Activated CD4-positive, alpha-beta T cell treated with anti-CD3 and anti-CD28 coated beads for 36 hours (primary cell): ENCODE measurements at regions of chr17 and their contacts with region 1.

Region 1: DNA sequence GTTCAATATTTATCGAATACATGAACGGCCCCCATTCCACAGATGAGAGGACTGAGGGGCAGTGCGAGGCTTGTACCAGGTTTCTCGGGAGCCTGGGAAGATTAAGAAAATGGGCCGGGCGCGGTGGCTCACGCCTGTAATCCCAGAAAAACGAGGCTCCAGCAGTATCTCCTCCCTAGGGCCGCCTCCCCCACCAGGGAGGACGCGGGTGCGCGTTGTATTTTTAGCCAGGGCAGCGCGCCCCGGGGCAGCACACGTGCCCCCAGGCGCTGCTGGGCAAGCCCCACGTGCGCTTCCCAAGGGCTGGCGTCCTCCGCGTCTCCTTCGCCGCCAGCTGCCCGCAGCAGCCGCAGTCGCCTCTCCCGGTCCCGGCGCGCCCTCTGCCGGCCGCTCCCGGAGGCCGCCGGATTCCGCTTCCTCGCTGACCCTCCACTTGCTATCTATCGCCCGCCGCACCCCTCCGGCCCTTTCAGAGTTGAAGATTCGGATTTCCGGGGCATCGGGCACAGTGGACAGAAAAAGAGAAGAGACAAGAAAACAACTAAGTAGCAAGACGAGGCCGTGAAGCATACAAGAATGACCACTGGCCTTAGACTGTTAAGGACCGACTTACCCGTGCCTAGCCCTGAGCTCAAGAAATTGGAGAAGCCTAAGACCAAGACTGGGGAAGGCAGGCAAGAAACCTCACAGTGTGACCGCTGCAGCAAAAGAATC is 1.9 kb upstream of the YBX2 start:
- DNase-seq: peak; percentile 83
- ATAC-seq: peak; percentile 38
- H3K4me3 Mint-ChIP-seq: peak overlapping the region; percentile 35
- H3K27ac Mint-ChIP-seq: no peak overlapping the region
- H3K4me1 Mint-ChIP-seq: peaks cover 23% of the 10 kb centered on the region
- H3K27me3 Mint-ChIP-seq: peaks cover 19% of the 10 kb centered on the region

Region 2: GRCh38 chr17:5758651-5759050 is 1537.7 kb before region 1 on chr17:
- CTCF ChIA-PET with region 1: no interaction called
- POLR2A ChIA-PET with region 1: no interaction called
- intact Hi-C with region 1: no loop called
- DNase-seq: peak; percentile 22
- ATAC-seq: peak; percentile 49
- H3K4me3 Mint-ChIP-seq: no peak overlapping the region
- H3K27ac Mint-ChIP-seq: no peak overlapping the region
- H3K4me1 Mint-ChIP-seq: no peaks in the 10 kb centered on the region
- H3K27me3 Mint-ChIP-seq: peaks cover 43% of the 10 kb centered on the region

Region 3: DNA sequence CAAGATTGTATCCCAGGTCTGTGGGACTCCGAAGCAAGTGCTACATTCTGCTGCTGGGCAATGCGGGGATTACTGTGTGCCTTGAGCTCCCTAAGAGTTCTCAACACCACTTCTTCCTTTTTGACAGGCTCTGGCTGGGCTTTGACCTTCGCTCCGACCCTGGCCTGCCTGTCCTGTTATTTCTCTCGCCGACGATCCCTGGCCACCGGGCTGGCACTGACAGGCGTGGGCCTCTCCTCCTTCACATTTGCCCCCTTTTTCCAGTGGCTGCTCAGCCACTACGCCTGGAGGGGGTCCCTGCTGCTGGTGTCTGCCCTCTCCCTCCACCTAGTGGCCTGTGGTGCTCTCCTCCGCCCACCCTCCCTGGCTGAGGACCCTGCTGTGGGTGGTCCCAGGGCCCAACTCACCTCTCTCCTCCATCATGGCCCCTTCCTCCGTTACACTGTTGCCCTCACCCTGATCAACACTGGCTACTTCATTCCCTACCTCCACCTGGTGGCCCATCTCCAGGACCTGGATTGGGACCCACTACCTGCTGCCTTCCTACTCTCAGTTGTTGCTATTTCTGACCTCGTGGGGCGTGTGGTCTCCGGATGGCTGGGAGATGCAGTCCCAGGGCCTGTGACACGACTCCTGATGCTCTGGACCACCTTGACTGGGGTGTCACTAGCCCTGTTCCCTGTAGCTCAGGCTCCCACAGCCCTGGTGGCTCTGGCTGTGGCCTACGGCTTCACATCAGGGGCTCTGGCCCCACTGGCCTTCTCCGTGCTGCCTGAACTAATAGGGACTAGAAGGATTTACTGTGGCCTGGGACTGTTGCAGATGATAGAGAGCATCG is 258.1 kb before region 1 on chr17:
- CTCF ChIA-PET with region 1: no interaction called
- POLR2A ChIA-PET with region 1: no interaction called
- intact Hi-C with region 1: no loop called
- DNase-seq: no peak
- ATAC-seq: no peak
- H3K4me3 Mint-ChIP-seq: no peak overlapping the region
- H3K27ac Mint-ChIP-seq: no peak overlapping the region
- H3K4me1 Mint-ChIP-seq: peaks cover 39% of the 10 kb centered on the region
- H3K27me3 Mint-ChIP-seq: no peaks in the 10 kb centered on the region

Region 4: DNA sequence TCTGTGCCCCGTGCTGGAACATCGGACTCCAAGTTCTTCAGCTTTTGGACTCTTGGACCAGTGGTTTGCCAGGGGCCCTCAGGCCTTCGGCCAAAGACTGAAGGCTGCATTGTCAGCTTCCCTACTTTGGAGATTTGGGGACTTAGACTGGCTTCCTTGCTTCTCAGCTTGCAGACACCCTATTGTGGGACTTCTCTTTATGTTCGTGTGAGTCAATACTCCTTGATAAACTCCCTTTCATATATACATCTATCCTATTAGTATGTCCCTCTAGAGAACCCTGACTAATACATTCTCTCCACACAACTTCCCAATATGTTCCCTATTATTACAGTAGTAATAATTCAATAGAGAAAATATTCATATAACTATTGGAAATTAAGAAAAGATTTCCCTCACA is 172.5 kb before region 1 on chr17:
- CTCF ChIA-PET with region 1: no interaction called
- POLR2A ChIA-PET with region 1: no interaction called
- intact Hi-C with region 1: no loop called
- DNase-seq: no peak
- ATAC-seq: no peak
- H3K4me3 Mint-ChIP-seq: no peak overlapping the region
- H3K27ac Mint-ChIP-seq: no peak overlapping the region
- H3K4me1 Mint-ChIP-seq: no peaks in the 10 kb centered on the region
- H3K27me3 Mint-ChIP-seq: peaks cover 8% of the 10 kb centered on the region

Region 5: GRCh38 chr17:7219812-7220581 is 76.3 kb before region 1 on chr17 and contains the starts of genes ACADVL and DLG4:
- CTCF ChIA-PET with region 1: interaction called, 22 read pairs
- POLR2A ChIA-PET with region 1: no interaction called
- intact Hi-C with region 1: loop called in 1 of 2 experiments (anchors 1 kb)
- DNase-seq: peak; percentile 94
- ATAC-seq: peak; percentile 73
- H3K4me3 Mint-ChIP-seq: peak within 1 kb of the TSS; percentile 89
- H3K27ac Mint-ChIP-seq: peak within 1 kb of the TSS; percentile 96
- H3K4me1 Mint-ChIP-seq: peaks cover 48% of the 10 kb centered on the region
- H3K27me3 Mint-ChIP-seq: no peaks in the 10 kb centered on the region
- total RNA-seq, gene ACADVL: 263 to 345 TPM
- total RNA-seq, gene DLG4: 11.7 to 15.4 TPM

Region 6: DNA sequence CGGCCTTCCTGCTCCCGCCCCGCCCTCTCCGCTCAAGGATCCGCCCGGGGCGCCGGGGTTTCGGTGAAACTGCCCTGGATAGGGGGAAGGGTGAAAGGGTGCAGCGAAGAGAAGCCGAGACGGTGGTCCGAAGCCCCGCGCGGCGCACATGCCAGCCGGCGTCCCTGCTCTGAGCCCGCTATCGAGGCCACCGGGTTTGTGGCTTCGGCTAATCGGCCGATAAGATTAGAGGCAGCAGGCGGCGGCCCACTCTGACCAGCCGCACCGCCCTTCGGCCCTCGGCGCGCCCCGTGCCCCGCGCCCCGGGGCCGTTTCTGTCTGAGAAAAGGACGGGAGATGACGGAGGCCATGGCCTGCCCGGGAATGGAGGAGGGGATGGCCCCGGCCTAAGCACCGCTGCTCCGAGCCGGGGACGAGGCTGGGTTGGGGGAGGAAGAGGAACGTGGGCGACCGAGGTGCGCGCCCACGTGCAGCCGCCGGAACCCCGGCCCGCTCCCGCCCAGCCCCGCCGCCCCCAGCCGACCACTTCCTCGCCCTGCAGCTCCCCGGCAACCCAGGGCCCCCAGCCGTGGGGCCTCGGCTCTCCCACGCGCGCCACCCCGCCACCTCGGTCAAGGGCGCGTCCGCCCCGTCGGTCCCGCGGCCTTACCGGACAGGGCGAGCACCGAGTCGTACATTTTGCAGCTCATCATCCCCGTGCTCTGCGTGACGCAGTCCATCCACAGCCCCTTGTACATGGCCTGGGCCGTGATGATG is 35.0 kb before region 1 on chr17:
- CTCF ChIA-PET with region 1: interaction called, 11 read pairs
- POLR2A ChIA-PET with region 1: interaction called, 5 read pairs
- intact Hi-C with region 1: loop called in 1 of 2 experiments (anchors 5 kb)
- DNase-seq: peak; percentile 57
- ATAC-seq: peak; percentile 41
- H3K4me3 Mint-ChIP-seq: peak overlapping the region; percentile 45
- H3K27ac Mint-ChIP-seq: no peak overlapping the region
- H3K4me1 Mint-ChIP-seq: peaks cover 28% of the 10 kb centered on the region
- H3K27me3 Mint-ChIP-seq: peaks cover 23% of the 10 kb centered on the region

Region 7: DNA sequence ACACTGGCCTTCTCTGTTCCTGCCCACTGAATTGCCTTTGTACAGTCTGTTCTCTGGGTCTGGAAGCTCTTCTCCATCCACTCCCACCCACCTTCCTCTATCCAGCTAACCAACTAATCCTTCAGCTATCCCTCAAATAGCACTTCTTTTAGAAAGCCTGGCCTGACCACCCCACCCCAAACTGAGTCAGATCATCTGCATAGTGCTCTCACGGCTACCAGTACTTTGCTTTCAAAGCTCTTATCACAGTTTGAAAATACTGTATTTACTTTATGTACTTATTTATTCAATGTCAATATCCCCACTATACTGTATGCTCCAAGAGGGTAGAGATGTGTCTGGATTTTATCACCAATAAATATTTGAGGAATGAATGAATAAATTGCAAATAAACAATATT is 29.6 kb before region 1 on chr17:
- CTCF ChIA-PET with region 1: interaction called, 11 read pairs
- POLR2A ChIA-PET with region 1: interaction called, 3 read pairs
- intact Hi-C with region 1: loop called in 1 of 2 experiments (anchors 5 kb)
- DNase-seq: no peak
- ATAC-seq: no peak
- H3K4me3 Mint-ChIP-seq: no peak overlapping the region
- H3K27ac Mint-ChIP-seq: no peak overlapping the region
- H3K4me1 Mint-ChIP-seq: peaks cover 20% of the 10 kb centered on the region
- H3K27me3 Mint-ChIP-seq: peaks cover 24% of the 10 kb centered on the region

Region 8: DNA sequence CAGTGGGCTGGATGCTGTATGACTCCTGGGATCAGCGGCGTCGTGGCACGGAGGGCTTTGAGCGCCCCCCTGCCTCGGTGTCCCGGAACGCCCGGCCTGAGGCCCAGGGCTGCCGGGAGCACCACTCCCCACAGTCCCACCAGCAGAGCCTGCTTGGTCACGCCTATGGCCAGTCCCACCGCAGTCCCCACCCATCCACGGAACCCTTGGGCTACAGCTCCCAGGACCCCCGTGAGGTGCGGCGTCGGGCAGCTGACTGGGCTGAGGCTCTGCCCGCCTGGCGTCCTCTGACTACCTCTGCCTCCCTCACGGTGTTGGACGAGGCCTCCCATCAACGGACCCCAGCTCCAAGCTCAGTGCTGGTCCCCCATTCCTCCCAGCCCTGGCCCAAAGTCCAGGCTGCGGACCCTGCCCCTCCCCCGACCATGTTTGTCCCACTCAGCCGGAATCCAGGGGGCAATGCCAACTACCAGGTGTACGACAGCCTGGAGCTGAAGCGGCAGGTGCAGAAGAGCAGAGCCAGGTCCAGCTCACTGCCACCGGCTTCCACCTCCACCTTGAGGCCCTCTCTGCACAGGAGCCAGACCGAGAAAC is 130.6 kb after region 1 on chr17:
- CTCF ChIA-PET with region 1: no interaction called
- POLR2A ChIA-PET with region 1: no interaction called
- intact Hi-C with region 1: no loop called
- DNase-seq: no peak
- ATAC-seq: no peak
- H3K4me3 Mint-ChIP-seq: no peak overlapping the region
- H3K27ac Mint-ChIP-seq: no peak overlapping the region
- H3K4me1 Mint-ChIP-seq: no peaks in the 10 kb centered on the region
- H3K27me3 Mint-ChIP-seq: no peaks in the 10 kb centered on the region